Caco-2 (cell line): ENCODE measurements at regions of chr7 and their contacts with region 1.

Region 1: GRCh38 chr7:137898839-137899721 is 52.3 kb upstream of the DGKI start:
- DNase-seq: peak; percentile 84 to 89
- H3K4me3 ChIP-seq: no peak overlapping the region
- H3K4me3 Mint-ChIP-seq: no peak overlapping the region
- H3K27ac Mint-ChIP-seq: peak overlapping the region; percentile 54
- H3K4me1 ChIP-seq: peaks cover 6% of the 10 kb centered on the region
- H3K4me1 Mint-ChIP-seq: peaks cover 20% of the 10 kb centered on the region
- H3K27me3 ChIP-seq: no peaks in the 10 kb centered on the region
- H3K27me3 Mint-ChIP-seq: no peaks in the 10 kb centered on the region
- CTCF ChIP-seq: peak; percentile 92 to 96

Region 2: DNA sequence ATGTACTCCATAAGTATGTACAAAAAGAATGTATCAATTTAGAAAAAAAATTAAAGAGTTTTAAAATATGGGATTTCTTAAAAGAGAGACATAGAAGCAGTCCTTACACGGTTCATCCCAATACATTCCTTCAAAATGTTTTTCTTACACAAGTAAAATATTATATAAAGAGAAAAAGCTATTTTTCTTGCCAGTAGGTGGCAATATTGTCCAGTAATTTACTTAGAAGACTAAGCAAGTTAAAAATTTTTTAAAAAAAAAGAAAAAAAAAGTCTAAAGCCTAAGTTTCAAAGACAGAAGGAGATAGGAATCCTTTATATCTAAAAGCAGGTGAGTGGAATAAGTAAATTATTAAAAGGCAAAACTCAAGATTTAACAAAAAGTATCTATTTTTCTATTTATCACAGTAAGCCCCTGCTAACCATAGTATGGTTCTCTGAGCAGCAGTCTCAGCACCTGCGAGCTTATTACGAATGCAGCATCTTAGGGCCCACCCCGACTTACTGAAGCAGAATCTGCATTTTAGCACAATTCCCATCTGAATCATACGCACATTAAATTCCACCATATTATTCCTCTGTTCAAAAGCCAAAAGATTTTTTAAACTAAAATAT is 292.9 kb before region 1 on chr7:
- CTCF ChIA-PET with region 1: interaction called, 4 read pairs
- POLR2A ChIA-PET with region 1: no interaction called
- intact Hi-C with region 1: loop called (anchors 1 kb)
- DNase-seq: peak in 1 of 2 experiments; percentile 23
- H3K4me3 ChIP-seq: no peak overlapping the region
- H3K4me3 Mint-ChIP-seq: no peak overlapping the region
- H3K27ac Mint-ChIP-seq: no peak overlapping the region
- H3K4me1 ChIP-seq: no peaks in the 10 kb centered on the region
- H3K4me1 Mint-ChIP-seq: no peaks in the 10 kb centered on the region
- H3K27me3 ChIP-seq: no peaks in the 10 kb centered on the region
- H3K27me3 Mint-ChIP-seq: peaks cover 16% of the 10 kb centered on the region
- CTCF ChIP-seq: peak; percentile 29 to 51

Region 3: GRCh38 chr7:137656227-137656849 is 242.7 kb before region 1 on chr7:
- CTCF ChIA-PET with region 1: no interaction called
- POLR2A ChIA-PET with region 1: no interaction called
- intact Hi-C with region 1: loop called (anchors 1 kb)
- DNase-seq: peak; percentile 66 to 73
- H3K4me3 ChIP-seq: no peak overlapping the region
- H3K4me3 Mint-ChIP-seq: no peak overlapping the region
- H3K27ac Mint-ChIP-seq: no peak overlapping the region
- H3K4me1 ChIP-seq: no peaks in the 10 kb centered on the region
- H3K4me1 Mint-ChIP-seq: no peaks in the 10 kb centered on the region
- H3K27me3 ChIP-seq: no peaks in the 10 kb centered on the region
- H3K27me3 Mint-ChIP-seq: peaks cover 8% of the 10 kb centered on the region
- CTCF ChIP-seq: peak; percentile 88 to 90

Region 4: DNA sequence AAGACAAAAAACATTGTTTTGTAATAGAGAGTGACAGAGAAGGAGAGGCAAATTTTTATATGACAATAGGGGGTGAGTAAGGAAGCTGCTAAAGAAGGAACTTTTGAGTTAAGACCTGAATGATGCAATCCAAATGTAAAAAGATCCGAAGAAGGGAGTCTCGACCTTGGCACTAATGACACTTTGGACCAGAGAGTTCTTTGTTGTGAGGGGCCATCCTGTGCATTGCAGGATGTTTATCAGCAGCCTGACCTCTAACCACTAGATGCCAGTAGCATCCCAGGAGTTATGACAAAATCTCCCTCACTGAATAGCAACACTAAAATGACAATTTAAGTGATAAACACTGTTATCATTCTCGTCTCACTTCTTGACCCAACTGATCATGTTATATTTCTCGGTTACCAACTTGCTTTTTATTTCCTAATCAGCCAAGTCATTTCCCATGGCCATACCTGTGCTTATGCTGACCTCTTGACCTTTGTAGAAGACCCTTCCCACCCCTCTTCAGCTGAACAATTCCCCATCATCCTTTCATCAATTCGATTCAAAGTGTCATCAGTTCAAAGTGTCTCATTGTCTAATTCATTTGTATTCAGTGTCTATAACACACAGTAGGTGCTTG is 82.3 kb before region 1 on chr7:
- CTCF ChIA-PET with region 1: interaction called, 4 read pairs
- POLR2A ChIA-PET with region 1: no interaction called
- intact Hi-C with region 1: loop called (anchors 2 kb)
- DNase-seq: peak in 1 of 2 experiments; percentile 25
- H3K4me3 ChIP-seq: no peak overlapping the region
- H3K4me3 Mint-ChIP-seq: no peak overlapping the region
- H3K27ac Mint-ChIP-seq: no peak overlapping the region
- H3K4me1 ChIP-seq: no peaks in the 10 kb centered on the region
- H3K4me1 Mint-ChIP-seq: no peaks in the 10 kb centered on the region
- H3K27me3 ChIP-seq: no peaks in the 10 kb centered on the region
- H3K27me3 Mint-ChIP-seq: peaks cover 5% of the 10 kb centered on the region
- CTCF ChIP-seq: peak in 1 of 2 experiments; percentile 32

Region 5: DNA sequence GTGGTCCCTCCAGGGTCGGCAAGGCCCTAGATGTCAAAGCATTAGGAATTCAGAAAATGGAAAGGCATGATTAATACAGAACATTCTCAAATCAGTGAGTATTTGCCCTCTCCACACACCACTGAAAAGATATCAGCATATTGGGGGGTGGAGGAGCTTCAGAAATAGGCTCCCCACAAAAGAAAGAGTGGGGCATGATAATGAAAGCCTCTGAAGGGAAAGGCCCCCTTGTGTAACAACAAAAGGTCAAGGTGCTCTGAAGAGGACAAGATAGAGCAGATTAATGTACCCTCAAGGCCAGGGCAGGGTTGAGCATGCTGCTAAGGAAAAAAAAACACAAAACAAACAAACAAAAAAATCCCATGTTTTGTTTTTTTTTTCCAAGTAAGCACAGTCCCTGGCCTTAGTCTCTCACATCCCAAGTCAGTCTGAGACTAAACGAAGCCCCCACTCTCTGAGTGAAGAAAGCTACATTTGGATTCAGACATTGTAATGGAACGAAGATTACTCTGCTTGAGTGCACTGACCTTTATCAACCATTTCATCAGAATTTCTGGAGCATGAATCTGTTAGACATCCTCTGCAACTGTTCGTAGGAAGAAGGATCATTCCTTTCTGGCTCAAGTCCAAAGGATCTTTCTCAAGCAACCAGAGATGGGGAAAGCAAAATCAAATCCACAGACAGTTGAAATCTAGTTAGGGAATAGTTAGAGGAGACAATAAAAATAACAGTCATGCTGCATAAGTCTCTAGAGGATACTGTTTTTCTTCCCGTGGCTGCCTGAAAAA is 24.9 kb before region 1 on chr7:
- CTCF ChIA-PET with region 1: no interaction called
- POLR2A ChIA-PET with region 1: no interaction called
- intact Hi-C with region 1: no loop called
- DNase-seq: no peak
- H3K4me3 ChIP-seq: no peak overlapping the region
- H3K4me3 Mint-ChIP-seq: no peak overlapping the region
- H3K27ac Mint-ChIP-seq: no peak overlapping the region
- H3K4me1 ChIP-seq: no peaks in the 10 kb centered on the region
- H3K4me1 Mint-ChIP-seq: no peaks in the 10 kb centered on the region
- H3K27me3 ChIP-seq: no peaks in the 10 kb centered on the region
- H3K27me3 Mint-ChIP-seq: no peaks in the 10 kb centered on the region
- CTCF ChIP-seq: no peak

Region 6: GRCh38 chr7:138008547-138009349 is 109.7 kb after region 1 on chr7:
- CTCF ChIA-PET with region 1: interaction called, 16 read pairs
- POLR2A ChIA-PET with region 1: no interaction called
- intact Hi-C with region 1: loop called (anchors 1 kb)
- DNase-seq: peak; percentile 40 to 67
- H3K4me3 ChIP-seq: no peak overlapping the region
- H3K4me3 Mint-ChIP-seq: peak overlapping the region; percentile 24
- H3K27ac Mint-ChIP-seq: peak overlapping the region; percentile 57
- H3K4me1 ChIP-seq: 0 out of 2 replicates have a peak, but pooled peaks cover 3% of the 10 kb centered on the region
- H3K4me1 Mint-ChIP-seq: peaks cover 9% of the 10 kb centered on the region
- H3K27me3 ChIP-seq: no peaks in the 10 kb centered on the region
- H3K27me3 Mint-ChIP-seq: no peaks in the 10 kb centered on the region
- CTCF ChIP-seq: peak; percentile 78 to 86